Activated CD4-positive, alpha-beta T cell treated with anti-CD3 and anti-CD28 coated beads, Interleukin-2, amount 10 ng/mL, durations not matched to agents 24 days and 14 days (primary cell): ENCODE measurements at regions of chr12 and their contacts with region 1.

Region 1: GRCh38 chr12:56645717-56646446 is at the start of gene ATP5F1B:
- DNase-seq: peak; percentile 97
- H3K4me3 Mint-ChIP-seq: peak within 1 kb of the TSS; percentile 85
- H3K27ac Mint-ChIP-seq: peak within 1 kb of the TSS; percentile 97
- H3K4me1 Mint-ChIP-seq: peaks cover 18% of the 10 kb centered on the region
- H3K27me3 Mint-ChIP-seq: no peaks in the 10 kb centered on the region
- total RNA-seq, gene ATP5F1B: 760 and 771 TPM in 2 replicates

Region 2: DNA sequence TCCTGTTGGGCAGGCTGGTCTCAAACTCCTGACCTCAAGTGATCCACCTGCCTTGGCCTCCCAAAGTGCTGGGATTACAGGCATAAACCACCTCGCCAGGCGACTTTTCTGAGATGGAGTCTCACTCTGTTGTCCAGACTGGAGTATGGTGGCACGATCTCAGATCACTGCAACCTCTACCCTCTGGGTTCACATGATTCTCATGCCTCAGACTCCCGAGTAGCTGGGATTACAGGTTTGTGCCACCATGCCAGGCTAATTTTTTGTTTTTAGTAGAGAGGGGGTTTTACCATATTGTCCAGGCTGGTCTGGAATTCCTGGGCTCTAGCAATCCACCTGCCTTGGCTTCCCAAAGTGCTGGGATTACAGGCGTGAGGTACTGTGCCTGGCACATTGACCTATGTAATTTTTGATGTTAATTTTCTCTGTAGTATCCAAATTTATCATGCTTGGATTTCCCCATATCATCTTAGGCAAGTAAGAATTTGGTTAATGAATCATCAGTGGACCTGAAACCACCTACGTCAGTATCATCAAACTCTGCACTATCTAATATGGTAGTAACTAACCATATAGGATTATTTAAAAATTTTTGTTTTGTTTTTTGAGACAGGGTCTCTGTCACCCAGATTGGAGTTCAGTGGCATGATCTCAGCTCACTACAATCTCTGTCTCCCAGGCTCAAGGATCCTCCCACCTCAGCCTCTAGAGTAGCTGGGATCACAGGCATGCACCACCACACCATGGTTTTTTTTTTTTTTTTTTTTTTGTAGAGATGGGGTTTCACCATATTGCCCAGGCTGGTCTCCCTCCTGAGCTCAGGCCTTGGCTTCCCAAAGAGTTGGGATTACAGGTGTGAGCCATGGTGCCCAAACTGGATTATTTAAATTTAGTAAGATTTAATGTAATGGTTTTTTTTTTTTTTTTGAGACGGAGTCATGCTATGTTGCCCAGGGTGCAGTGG is 11.8 kb after region 1 on chr12:
- intact Hi-C with region 1: loop called (anchors 1 kb)
- DNase-seq: no peak
- H3K4me3 Mint-ChIP-seq: peak overlapping the region; percentile 30
- H3K27ac Mint-ChIP-seq: peak overlapping the region; percentile 73
- H3K4me1 Mint-ChIP-seq: peaks cover 4% of the 10 kb centered on the region
- H3K27me3 Mint-ChIP-seq: no peaks in the 10 kb centered on the region

Region 3: DNA sequence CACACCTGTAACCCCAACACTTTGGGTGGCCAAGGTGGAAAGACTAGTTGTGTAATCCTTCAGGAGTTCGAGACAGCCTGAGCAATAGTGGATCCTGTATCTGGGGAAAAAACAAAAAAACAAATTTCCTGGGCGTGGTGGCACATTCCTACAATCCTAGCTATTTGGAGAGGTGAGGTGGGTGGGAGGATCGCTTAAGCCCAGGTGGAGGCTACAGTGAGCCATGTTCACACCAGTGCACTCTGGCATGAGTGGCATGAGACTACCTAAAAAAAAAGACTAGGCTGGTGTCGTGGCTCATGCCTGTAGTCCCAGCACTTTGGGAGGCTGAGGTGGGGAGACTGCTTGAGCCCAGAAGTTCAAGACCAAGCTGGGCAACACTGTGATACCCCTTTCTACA is 25.0 kb after region 1 on chr12:
- intact Hi-C with region 1: no loop called
- DNase-seq: no peak
- H3K4me3 Mint-ChIP-seq: no peak overlapping the region
- H3K27ac Mint-ChIP-seq: no peak overlapping the region
- H3K4me1 Mint-ChIP-seq: peaks cover 30% of the 10 kb centered on the region
- H3K27me3 Mint-ChIP-seq: no peaks in the 10 kb centered on the region

Region 4: GRCh38 chr12:56724972-56725722 is 79.3 kb after region 1 on chr12 and contains the start of gene NACA:
- intact Hi-C with region 1: loop called (anchors 1 kb)
- DNase-seq: peak; percentile 99
- H3K4me3 Mint-ChIP-seq: peak within 1 kb of the TSS; percentile 99
- H3K27ac Mint-ChIP-seq: peak within 1 kb of the TSS; percentile 100
- H3K4me1 Mint-ChIP-seq: peaks cover 43% of the 10 kb centered on the region
- H3K27me3 Mint-ChIP-seq: no peaks in the 10 kb centered on the region
- total RNA-seq, gene NACA: 1,041 and 1,057 TPM in 2 replicates